Uterus (tissue), 4 donors: ENCODE measurements at regions of chr1 and their contacts with region 1.

Region 1: DNA sequence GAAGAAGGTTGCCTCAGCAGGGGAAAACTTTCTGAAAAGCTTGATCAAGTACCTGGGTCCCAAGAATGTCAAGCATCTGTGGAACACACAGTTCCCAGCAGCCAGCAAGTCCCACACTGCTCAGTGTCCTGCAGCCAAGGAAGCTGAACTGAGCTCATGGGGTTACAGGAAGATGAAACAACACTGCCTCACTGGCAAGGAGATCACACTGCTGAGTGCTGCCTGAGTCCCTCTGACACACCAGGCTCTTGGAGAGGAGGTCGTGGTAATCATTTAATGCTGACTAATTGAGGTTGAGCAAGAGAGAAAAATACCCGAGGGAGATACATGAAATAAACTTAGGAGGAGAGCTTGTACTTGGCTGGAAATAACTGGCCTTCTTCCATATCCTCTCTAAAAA is 75.2 kb downstream of the MPZL1 start:
- DNase-seq: peak; percentile 82 to 89
- H3K4me3 ChIP-seq: no peak overlapping the region
- H3K27ac ChIP-seq: peak overlapping the region; percentile 64 to 75
- H3K4me1 ChIP-seq: peaks cover 4 to 7% of the 10 kb centered on the region in 2 donors
- H3K27me3 ChIP-seq: no peaks in the 10 kb centered on the region
- CTCF ChIP-seq: no peak
- POLR2A ChIP-seq: no peak

Region 2: DNA sequence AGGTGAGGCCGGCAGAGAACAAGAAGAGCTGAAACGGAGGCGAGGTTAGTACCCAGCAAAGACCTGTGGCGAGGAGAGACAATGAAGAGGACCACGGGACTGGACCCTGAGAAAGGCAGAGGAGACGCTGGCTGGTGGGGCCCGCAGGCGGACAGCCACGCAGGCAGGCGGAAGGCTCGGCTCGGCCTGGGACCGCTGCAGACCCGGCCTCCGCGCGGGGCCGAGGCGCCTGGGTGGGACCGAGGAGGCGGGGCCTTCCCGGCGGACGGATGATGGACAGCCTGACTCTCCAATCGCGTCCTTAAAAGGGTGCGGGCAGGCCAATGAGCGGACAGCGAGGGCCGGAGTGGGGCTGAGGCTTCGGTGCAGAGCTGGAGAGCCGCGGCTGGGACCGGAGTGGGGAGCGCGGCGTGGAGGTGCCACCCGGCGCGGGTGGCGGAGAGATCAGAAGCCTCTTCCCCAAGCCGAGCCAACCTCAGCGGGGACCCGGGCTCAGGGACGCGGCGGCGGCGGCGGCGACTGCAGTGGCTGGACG is 75.3 kb before region 1 on chr1 and contains the start of gene MPZL1:
- intact Hi-C with region 1: loop called (anchors 5 kb)
- DNase-seq: peak; percentile 96 to 98
- H3K4me3 ChIP-seq: peak within 1 kb of the TSS; percentile 63 to 77
- H3K27ac ChIP-seq: peak within 1 kb of the TSS; percentile 84 to 89
- H3K4me1 ChIP-seq: peaks cover 0 to 11% of the 10 kb centered on the region in 2 donors
- H3K27me3 ChIP-seq: no peaks in the 10 kb centered on the region
- CTCF ChIP-seq: no peak
- POLR2A ChIP-seq: peak; percentile 79 to 89
- total RNA-seq, gene MPZL1: 24.3 to 150 (median 82.3) TPM

Region 3: GRCh38 chr1:167756730-167757405 is 40.1 kb before region 1 on chr1:
- intact Hi-C with region 1: no loop called
- DNase-seq: no peak
- H3K4me3 ChIP-seq: no peak overlapping the region
- H3K27ac ChIP-seq: no peak overlapping the region
- H3K4me1 ChIP-seq: peaks cover 0 to 3% of the 10 kb centered on the region in 2 donors
- H3K27me3 ChIP-seq: no peaks in the 10 kb centered on the region
- CTCF ChIP-seq: no peak
- POLR2A ChIP-seq: no peak